CD4-positive, alpha-beta T cell (primary cell): ENCODE measurements at regions of chr1 and their contacts with region 1.

Region 1: GRCh38 chr1:220046052-220046930 is at the start of gene EPRS1:
- DNase-seq: peak; percentile 86 to 99 (median 93)
- ATAC-seq: peak; percentile 98
- H3K4me3 ChIP-seq: peak within 1 kb of the TSS; percentile 99
- H3K4me3 Mint-ChIP-seq: peak within 1 kb of the TSS; percentile 97
- H3K27ac ChIP-seq: peak within 1 kb of the TSS; percentile 74 to 82
- H3K27ac Mint-ChIP-seq: peak within 1 kb of the TSS; percentile 91
- H3K4me1 ChIP-seq: peaks cover 19% of the 10 kb centered on the region
- H3K4me1 Mint-ChIP-seq: peaks cover 37% of the 10 kb centered on the region
- H3K27me3 ChIP-seq: no peaks in the 10 kb centered on the region
- H3K27me3 Mint-ChIP-seq: no peaks in the 10 kb centered on the region
- CTCF ChIP-seq: peak; percentile 66
- total RNA-seq, gene EPRS1: 37.4 to 39.6 TPM

Region 2: DNA sequence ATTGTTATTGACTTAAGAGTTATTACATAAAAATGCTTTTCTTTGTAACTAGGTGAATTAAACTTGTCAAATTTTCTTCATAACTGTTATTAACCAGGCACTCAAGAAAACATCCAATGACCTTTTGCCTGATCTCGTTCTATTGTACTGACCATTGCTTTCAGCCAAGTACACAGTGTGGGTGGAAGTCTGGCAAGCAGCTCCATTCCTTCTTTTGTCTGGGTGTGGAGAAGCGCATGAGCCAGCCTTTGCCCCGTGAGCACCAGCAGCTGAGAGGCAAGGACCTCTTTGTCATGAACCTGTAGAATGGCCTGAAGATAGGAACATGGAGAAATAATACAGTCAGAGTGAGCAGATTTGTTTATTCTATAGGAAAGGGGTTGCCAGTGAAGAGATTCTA is 105.2 kb after region 1 on chr1:
- CTCF ChIA-PET with region 1: no interaction called
- POLR2A ChIA-PET with region 1: no interaction called
- intact Hi-C with region 1: no loop called
- DNase-seq: no peak
- ATAC-seq: no peak
- H3K4me3 ChIP-seq: no peak overlapping the region
- H3K4me3 Mint-ChIP-seq: no peak overlapping the region
- H3K27ac ChIP-seq: no peak overlapping the region
- H3K27ac Mint-ChIP-seq: peak overlapping the region; percentile 8
- H3K4me1 ChIP-seq: no peaks in the 10 kb centered on the region
- H3K4me1 Mint-ChIP-seq: peaks cover 3% of the 10 kb centered on the region
- H3K27me3 ChIP-seq: no peaks in the 10 kb centered on the region
- H3K27me3 Mint-ChIP-seq: no peaks in the 10 kb centered on the region
- CTCF ChIP-seq: no peak

Region 3: DNA sequence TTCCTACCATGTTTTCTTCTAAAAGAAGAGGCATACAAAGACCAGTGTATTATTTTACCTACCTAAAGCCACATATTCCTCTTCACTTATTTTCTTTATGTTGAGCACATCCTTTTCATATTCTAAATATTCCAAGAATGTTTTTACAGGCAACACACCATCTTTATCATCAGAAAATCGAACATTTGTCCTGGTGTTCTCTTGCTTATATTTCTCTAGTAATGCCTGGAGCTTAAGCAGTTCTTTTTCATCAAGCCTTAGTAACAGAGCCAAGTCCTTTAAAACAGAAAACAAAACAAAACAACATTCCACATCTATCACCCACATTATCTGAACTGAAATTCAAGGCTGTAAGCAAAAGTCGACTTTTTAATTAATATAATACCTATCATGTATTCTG is 136.4 kb after region 1 on chr1:
- CTCF ChIA-PET with region 1: no interaction called
- POLR2A ChIA-PET with region 1: no interaction called
- intact Hi-C with region 1: no loop called
- DNase-seq: no peak
- ATAC-seq: no peak
- H3K4me3 ChIP-seq: no peak overlapping the region
- H3K4me3 Mint-ChIP-seq: no peak overlapping the region
- H3K27ac ChIP-seq: no peak overlapping the region
- H3K27ac Mint-ChIP-seq: no peak overlapping the region
- H3K4me1 ChIP-seq: no peaks in the 10 kb centered on the region
- H3K4me1 Mint-ChIP-seq: peaks cover 1% of the 10 kb centered on the region
- H3K27me3 ChIP-seq: no peaks in the 10 kb centered on the region
- H3K27me3 Mint-ChIP-seq: no peaks in the 10 kb centered on the region
- CTCF ChIP-seq: no peak

Region 4: GRCh38 chr1:220272047-220272840 is 226.0 kb after region 1 on chr1 and contains the start of gene RAB3GAP2:
- CTCF ChIA-PET with region 1: no interaction called
- POLR2A ChIA-PET with region 1: no interaction called
- intact Hi-C with region 1: loop called in 1 of 2 experiments (anchors 5 kb)
- DNase-seq: peak; percentile 93 to 99 (median 96)
- ATAC-seq: peak; percentile 91
- H3K4me3 ChIP-seq: peak within 1 kb of the TSS; percentile 87
- H3K4me3 Mint-ChIP-seq: no peak within 1 kb of the TSS
- H3K27ac ChIP-seq: peak within 1 kb of the TSS; percentile 81 to 87
- H3K27ac Mint-ChIP-seq: no peak within 1 kb of the TSS
- H3K4me1 ChIP-seq: peaks cover 18% of the 10 kb centered on the region
- H3K4me1 Mint-ChIP-seq: peaks cover 18% of the 10 kb centered on the region
- H3K27me3 ChIP-seq: no peaks in the 10 kb centered on the region
- H3K27me3 Mint-ChIP-seq: peaks cover 5% of the 10 kb centered on the region
- CTCF ChIP-seq: no peak
- total RNA-seq, gene RAB3GAP2: 34.7 to 39.4 TPM